Dorsolateral prefrontal cortex (tissue), 120 donors: ENCODE measurements at regions of chr19 and their contacts with region 1.

Region 1: GRCh38 chr19:3403489-3404323 is 37.3 kb downstream of the NFIC start:
- DNase-seq: peak; percentile 60 to 85 (median 80)
- H3K4me3 ChIP-seq: peak overlapping the region; percentile 27 to 77 (median 58)
- H3K27ac ChIP-seq: peak overlapping the region; percentile 98 to 100 (median 100)
- H3K27me3 ChIP-seq: no peaks in the 10 kb centered on the region
- CTCF ChIP-seq: peak in 5 of 56 donors; percentile 9 to 20 (median 11)

Region 2: GRCh38 chr19:3343619-3344502 is 59.8 kb before region 1 on chr19:
- intact Hi-C with region 1: loop called in 1 of 2 experiments (anchors 5 kb)
- DNase-seq: peak; percentile 57 to 91 (median 84)
- H3K4me3 ChIP-seq: peak overlapping the region in 56 of 59 donors; percentile 6 to 61 (median 42)
- H3K27ac ChIP-seq: peak overlapping the region in 58 of 59 donors; percentile 8 to 92 (median 75)
- H3K27me3 ChIP-seq: no peaks in the 10 kb centered on the region
- CTCF ChIP-seq: peak in 46 of 56 donors; percentile 16 to 61 (median 40)

Region 3: GRCh38 chr19:3360421-3361383 is 43.0 kb before region 1 on chr19:
- intact Hi-C with region 1: loop called (anchors 1 to 2 kb)
- DNase-seq: peak; percentile 66 to 87 (median 72)
- H3K4me3 ChIP-seq: peak overlapping the region; percentile 54 to 98 (median 76)
- H3K27ac ChIP-seq: peak overlapping the region; percentile 71 to 100 (median 92)
- H3K27me3 ChIP-seq: no peaks in the 10 kb centered on the region
- CTCF ChIP-seq: peak in 55 of 56 donors; percentile 11 to 73 (median 46)

Region 4: DNA sequence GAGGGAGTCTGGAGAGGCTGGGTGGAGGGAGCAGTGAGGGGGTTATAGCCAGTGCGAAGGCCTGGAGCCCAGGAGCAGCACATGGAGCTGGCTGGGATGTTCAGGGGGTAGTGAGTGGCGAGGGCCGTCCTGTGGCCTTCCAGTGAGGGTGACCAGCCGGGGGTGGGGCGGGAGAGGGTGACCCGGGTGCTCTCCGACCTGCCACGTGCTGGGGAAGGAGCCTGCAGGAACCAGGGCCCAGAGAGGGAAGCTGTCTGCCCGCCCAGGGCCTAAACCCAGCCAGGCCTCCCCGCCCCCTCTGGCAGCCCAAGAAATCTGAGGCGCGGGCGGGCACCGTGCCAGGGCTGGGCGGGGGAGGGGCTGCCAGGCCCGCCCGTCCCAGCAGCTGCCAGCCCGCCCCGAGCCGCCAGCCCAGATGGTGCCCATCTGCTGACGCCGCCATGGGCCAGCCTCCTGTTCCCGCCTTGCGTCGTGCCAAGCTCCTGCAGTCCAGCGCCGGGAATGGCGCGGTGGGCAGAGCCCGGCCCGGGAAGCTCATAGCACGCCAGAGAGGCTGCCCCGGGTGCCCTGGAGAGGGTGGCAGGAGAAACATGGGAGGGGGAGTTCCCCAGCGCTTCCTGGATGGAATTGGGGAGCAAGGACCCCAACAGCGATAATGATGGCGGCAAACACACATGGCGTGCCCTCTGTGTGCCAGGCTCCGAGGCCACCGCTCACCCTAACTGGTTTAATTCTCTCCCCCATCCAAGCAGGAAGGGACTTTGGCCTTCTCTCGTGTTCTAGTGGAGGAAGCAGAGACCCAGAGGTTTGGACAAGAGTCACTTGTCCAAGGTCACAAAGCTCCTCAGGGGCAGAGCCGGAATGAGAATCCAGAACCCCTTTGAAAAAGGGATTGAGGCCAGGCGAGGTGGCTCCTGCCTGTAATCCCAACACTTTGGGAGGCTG is 15.8 kb before region 1 on chr19:
- intact Hi-C with region 1: loop called in 1 of 2 experiments (anchors 2 kb)
- DNase-seq: peak; percentile 85 to 95 (median 92)
- H3K4me3 ChIP-seq: peak overlapping the region in 51 of 59 donors; percentile 1 to 55 (median 32)
- H3K27ac ChIP-seq: peak overlapping the region; percentile 73 to 97 (median 93)
- H3K27me3 ChIP-seq: no peaks in the 10 kb centered on the region
- CTCF ChIP-seq: peak in 32 of 56 donors; percentile 6 to 50 (median 32)

Region 5: GRCh38 chr19:3429581-3430080 is 25.9 kb after region 1 on chr19:
- intact Hi-C with region 1: loop called in 1 of 2 experiments (anchors 1 kb)
- DNase-seq: peak; percentile 77 to 89 (median 84)
- H3K4me3 ChIP-seq: peak overlapping the region in 5 of 59 donors; percentile 3 to 33 (median 25)
- H3K27ac ChIP-seq: peak overlapping the region in 58 of 59 donors; percentile 49 to 94 (median 80)
- H3K27me3 ChIP-seq: no peaks in the 10 kb centered on the region
- CTCF ChIP-seq: peak; percentile 93 to 100 (median 98)

Region 6: DNA sequence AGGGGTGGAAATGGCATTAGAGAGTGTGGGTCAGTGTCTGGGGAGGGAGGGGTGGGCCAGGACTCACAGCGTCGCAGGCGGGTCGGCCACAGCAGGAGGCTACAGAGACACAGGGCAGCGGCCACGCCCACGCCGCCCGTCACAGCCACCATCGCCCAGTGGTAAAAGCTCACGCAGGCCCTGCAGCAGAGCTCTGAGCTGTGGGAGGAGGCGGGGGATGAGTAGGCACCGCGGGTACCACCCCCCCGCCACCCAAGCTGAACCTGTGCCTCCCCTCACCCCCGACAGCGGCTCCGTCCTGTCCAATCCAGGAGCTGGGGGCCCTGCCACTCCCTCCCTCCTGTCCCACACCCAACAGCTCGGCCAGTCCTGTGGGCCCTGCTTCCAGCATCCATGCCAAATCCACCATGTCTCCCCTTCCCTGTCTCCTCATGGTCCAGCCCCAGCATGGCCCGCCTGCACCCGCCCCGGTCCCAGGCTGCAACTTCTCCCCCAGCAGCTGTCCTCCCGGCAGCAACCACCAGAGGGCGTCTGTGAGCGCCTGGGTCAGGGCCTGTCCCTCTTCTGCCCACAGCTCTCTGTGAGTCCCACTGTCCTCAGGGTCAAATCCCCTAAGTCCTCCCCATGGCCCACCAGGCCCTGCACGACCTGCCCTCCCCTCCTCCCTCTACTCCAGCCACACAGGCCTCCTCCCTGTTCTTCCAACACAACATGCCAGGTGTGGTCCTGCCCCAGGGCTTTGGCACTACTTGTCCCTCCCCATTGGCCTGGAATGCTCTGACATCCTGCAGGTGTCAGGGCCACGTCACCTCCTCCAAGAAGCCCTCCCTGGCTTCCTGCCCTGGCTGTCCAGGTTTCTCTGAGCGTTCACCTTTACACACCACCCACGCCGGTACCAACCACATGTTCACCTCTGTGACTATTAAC is 141.3 kb after region 1 on chr19:
- intact Hi-C with region 1: no loop called
- DNase-seq: peak; percentile 62 to 91 (median 86)
- H3K4me3 ChIP-seq: peak overlapping the region in 50 of 59 donors; percentile 7 to 65 (median 42)
- H3K27ac ChIP-seq: peak overlapping the region in 58 of 59 donors; percentile 76 to 100 (median 95)
- H3K27me3 ChIP-seq: no peaks in the 10 kb centered on the region
- CTCF ChIP-seq: peak; percentile 68 to 100 (median 95)